Activated CD4-positive, alpha-beta T cell treated with anti-CD3 and anti-CD28 coated beads, Interleukin-2, amount 10 ng/mL, durations not matched to agents 24 days and 14 days (primary cell): ENCODE measurements at regions of chr5 and their contacts with region 1.

Region 1: GRCh38 chr5:61408476-61409168 is 76.6 kb downstream of the ZSWIM6 start:
- DNase-seq: peak; percentile 98
- H3K4me3 Mint-ChIP-seq: peak overlapping the region; percentile 79
- H3K27ac Mint-ChIP-seq: peak overlapping the region; percentile 89
- H3K4me1 Mint-ChIP-seq: peaks cover 20% of the 10 kb centered on the region
- H3K27me3 Mint-ChIP-seq: peaks cover 16% of the 10 kb centered on the region

Region 2: GRCh38 chr5:60084226-60084625 is 1324.4 kb before region 1 on chr5:
- intact Hi-C with region 1: no loop called
- DNase-seq: no peak
- H3K4me3 Mint-ChIP-seq: no peak overlapping the region
- H3K27ac Mint-ChIP-seq: no peak overlapping the region
- H3K4me1 Mint-ChIP-seq: no peaks in the 10 kb centered on the region
- H3K27me3 Mint-ChIP-seq: no peaks in the 10 kb centered on the region

Region 3: DNA sequence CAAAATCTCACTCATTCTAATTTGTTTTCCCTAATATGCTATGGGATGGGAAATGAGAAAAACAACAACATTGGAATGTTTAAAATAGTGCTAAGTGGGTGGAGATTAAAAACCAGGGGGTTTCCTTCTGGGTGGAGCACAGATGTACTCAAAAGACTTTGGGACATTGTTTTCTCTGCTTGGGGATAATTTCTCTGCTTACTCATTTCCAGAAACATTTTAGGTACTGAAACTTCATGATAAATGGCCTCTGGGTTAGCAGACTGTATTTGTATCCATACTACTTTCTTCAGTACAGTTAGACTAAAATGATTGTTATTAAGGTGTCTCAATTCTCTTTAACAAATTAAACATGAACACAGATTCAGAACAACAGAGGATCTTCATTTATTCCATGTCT is 582.0 kb before region 1 on chr5:
- intact Hi-C with region 1: loop called (anchors 10 kb)
- DNase-seq: no peak
- H3K4me3 Mint-ChIP-seq: no peak overlapping the region
- H3K27ac Mint-ChIP-seq: no peak overlapping the region
- H3K4me1 Mint-ChIP-seq: peaks cover 22% of the 10 kb centered on the region
- H3K27me3 Mint-ChIP-seq: no peaks in the 10 kb centered on the region

Region 4: DNA sequence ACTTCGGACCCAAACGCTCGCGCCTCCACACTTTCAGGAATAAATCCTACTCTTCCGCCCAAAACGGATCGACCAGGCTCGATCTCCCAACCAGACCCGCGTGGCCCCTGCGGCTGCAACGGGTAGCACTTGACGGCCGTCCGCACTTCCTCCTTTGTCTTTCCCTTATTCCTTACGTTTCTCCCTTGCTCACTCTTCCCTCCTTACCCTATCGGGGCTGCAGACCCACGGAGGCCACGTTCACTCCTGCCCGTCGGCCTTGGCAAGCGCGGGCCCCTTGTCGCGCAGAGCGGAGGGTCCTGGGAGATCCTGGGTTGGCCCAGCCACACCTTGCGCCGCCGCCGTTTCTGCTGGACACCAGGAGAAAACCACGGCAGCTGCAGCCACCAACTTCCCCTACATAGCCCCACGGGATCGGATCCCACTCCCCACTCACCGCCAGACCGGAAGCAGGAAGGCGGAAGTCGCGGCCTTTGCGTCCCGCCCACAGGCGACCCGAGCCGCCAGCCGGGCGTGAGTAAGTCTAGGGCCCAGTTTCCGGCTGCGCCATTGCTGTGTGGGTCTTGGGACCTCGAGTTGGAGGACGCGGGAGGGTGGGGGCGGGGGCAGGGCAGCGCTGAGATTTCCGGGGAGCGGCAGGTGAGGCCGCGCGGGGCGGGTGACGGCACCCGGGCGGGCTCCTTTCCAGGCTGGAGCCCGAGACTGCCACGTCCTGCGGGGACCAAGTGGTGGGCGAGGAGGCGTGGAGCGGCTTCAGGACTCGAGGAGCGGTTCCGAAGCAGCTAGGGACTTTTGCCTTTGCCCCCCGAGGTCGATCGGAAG is 246.4 kb before region 1 on chr5 and contains the start of gene SMIM15:
- intact Hi-C with region 1: loop called (anchors 5 kb)
- DNase-seq: peak; percentile 96
- H3K4me3 Mint-ChIP-seq: peak within 1 kb of the TSS; percentile 99
- H3K27ac Mint-ChIP-seq: peak within 1 kb of the TSS; percentile 99
- H3K4me1 Mint-ChIP-seq: peaks cover 32% of the 10 kb centered on the region
- H3K27me3 Mint-ChIP-seq: no peaks in the 10 kb centered on the region
- total RNA-seq, gene SMIM15: 82.9 and 92.8 TPM in 2 replicates

Region 5: GRCh38 chr5:61357745-61358144 is 50.9 kb before region 1 on chr5:
- intact Hi-C with region 1: loop called (anchors 5 kb)
- DNase-seq: no peak
- H3K4me3 Mint-ChIP-seq: no peak overlapping the region
- H3K27ac Mint-ChIP-seq: no peak overlapping the region
- H3K4me1 Mint-ChIP-seq: peaks cover 2% of the 10 kb centered on the region
- H3K27me3 Mint-ChIP-seq: no peaks in the 10 kb centered on the region

Region 6: DNA sequence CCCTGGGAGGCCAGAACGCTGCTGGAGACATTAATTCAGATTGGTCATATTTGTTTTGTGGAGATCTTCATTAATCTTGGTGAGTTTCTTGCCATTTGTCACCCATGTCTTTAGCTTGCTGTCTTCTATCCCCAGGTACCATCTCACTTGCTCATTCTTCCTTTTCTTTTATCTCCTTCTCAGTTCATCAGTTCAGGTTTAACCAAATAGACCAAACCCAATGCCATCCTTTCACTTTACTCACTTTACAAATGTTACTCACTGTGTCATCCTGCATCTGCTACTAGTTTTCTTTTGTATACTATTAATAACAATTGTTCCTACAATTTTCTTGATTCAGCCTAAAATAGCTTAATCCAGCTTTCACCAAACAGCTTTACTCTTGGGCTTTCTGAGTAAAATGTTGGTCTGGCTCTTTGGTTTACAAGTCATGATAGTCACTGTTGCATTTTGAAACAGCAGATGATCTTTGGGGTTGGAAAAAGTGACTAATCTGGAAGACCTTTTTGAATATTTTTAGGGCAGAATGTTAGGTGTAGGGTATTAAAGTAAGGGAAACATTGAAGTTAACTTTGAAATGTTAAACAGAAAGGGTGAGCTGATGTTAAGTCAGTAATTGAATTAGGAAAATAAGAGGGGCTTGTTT is 170.4 kb after region 1 on chr5:
- intact Hi-C with region 1: loop called (anchors 1 kb)
- DNase-seq: no peak
- H3K4me3 Mint-ChIP-seq: no peak overlapping the region
- H3K27ac Mint-ChIP-seq: no peak overlapping the region
- H3K4me1 Mint-ChIP-seq: peaks cover 4% of the 10 kb centered on the region
- H3K27me3 Mint-ChIP-seq: no peaks in the 10 kb centered on the region